ENCODE measurements at regions of chr9 and their contacts with region 1.

Region 1: GRCh38 chr9:81705578-81705977 is 16.2 kb upstream of the TLE1 start:
- DNase-seq: no peak
- H3K4me3 ChIP-seq: no peak overlapping the region
- H3K27ac ChIP-seq: no peak overlapping the region
- H3K4me1 ChIP-seq: peaks cover 24% of the 10 kb centered on the region
- H3K27me3 ChIP-seq: no peaks in the 10 kb centered on the region
- CTCF ChIP-seq: no peak

Region 2: DNA sequence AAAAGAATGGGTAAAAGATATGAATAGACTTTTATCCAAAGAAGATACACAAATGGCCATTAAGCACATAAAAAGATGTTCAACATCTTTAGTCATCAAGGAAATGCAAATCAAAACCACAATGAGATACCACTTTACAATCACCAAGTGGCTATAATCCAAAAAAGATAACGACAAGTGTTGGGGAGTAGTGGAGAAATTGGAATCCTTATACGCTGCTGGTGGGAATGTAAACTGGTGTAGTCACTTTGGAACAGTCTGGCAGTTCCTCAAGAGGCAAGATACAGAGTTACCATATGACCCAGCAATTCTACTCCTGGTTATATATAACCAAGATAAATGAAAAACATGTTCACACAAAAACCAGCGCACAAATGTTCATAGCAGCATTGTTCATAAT is 517.9 kb after region 1 on chr9:
- CTCF ChIA-PET with region 1: no interaction called
- POLR2A ChIA-PET with region 1: interaction called, 19 read pairs
- intact Hi-C with region 1: no loop called
- DNase-seq: no peak
- H3K4me3 ChIP-seq: no peak overlapping the region
- H3K27ac ChIP-seq: no peak overlapping the region
- H3K4me1 ChIP-seq: no peaks in the 10 kb centered on the region
- H3K27me3 ChIP-seq: no peaks in the 10 kb centered on the region
- CTCF ChIP-seq: no peak